H1 (cell line): ENCODE measurements at regions of chr11 and their contacts with region 1.

Region 1: GRCh38 chr11:3164138-3164978 is 752 bp downstream of the OSBPL5 start:
- DNase-seq: no peak
- H3K4me3 ChIP-seq: peak overlapping the region; percentile 49 to 68 (median 54)
- H3K27ac ChIP-seq: no peak overlapping the region
- H3K4me1 ChIP-seq: peaks cover 8 to 34% (median 29%) of the 10 kb centered on the region in 4 experiments
- H3K27me3 ChIP-seq: peaks cover 0 to 44% (median 21%) of the 10 kb centered on the region in 4 experiments; a peak in 6 of 7 replicates
- CTCF ChIP-seq: no peak
- EP300 ChIP-seq: no peak
- POLR2A ChIP-seq: no peak
- RAD21 ChIP-seq: no peak

Region 2: DNA sequence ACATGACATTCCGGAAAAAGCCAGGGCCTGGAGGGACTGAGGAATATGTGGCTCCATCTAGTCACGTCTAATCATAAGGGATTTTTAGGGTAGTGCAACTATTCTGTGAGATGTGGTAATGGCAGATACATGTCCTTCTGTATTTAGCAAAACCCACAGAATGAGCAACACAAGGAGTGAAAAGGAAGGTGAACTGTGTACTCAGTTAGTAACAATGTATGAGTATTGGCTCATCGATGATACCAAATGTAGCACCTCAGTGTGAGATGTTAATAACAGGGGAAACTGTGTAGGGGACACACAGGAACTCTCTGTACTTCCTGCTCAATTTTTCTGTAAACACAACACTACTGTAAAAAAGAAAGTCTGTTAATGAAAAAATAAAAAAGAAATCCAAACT is 65.2 kb before region 1 on chr11:
- CTCF ChIA-PET with region 1: no interaction called
- POLR2A ChIA-PET with region 1: no interaction called
- DNase-seq: no peak
- H3K4me3 ChIP-seq: no peak overlapping the region
- H3K27ac ChIP-seq: no peak overlapping the region
- H3K4me1 ChIP-seq: 0 out of 7 replicates have a peak, but pooled peaks cover 0 to 2% (median 0%) of the 10 kb centered on the region in 4 experiments
- H3K27me3 ChIP-seq: no peaks in the 10 kb centered on the region
- CTCF ChIP-seq: no peak
- EP300 ChIP-seq: no peak
- POLR2A ChIP-seq: no peak
- RAD21 ChIP-seq: no peak

Region 3: DNA sequence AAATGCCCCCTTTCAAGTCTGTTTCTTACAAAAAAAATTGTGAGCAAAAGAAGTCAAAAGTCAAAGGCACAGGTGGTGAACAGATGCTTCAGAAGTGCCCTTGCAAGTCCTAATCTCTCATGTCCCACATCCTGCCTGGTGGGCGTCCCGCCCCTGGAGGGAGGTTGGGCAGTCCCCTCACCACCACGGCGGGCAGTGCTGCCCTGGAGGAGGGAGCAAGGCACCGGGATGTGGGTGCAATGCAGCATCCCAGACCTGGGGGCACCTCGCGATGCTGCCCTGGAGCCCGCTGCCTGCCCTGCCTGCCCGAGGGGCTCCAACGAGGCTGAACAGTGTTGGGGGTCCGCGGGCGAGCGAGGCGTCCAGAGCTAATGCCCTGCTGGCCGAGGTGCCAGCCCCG is 38.4 kb after region 1 on chr11:
- CTCF ChIA-PET with region 1: interaction called, 11 read pairs
- POLR2A ChIA-PET with region 1: no interaction called
- DNase-seq: no peak
- H3K4me3 ChIP-seq: peak overlapping the region; percentile 30 to 60 (median 51); a peak in 7 of 8 replicates
- H3K27ac ChIP-seq: no peak overlapping the region
- H3K4me1 ChIP-seq: peaks cover 0 to 4% (median under 1%) of the 10 kb centered on the region in 4 experiments; a peak in 6 of 7 replicates
- H3K27me3 ChIP-seq: peaks cover 10 to 42% (median 31%) of the 10 kb centered on the region in 4 experiments
- CTCF ChIP-seq: no peak
- EP300 ChIP-seq: no peak
- POLR2A ChIP-seq: no peak
- RAD21 ChIP-seq: no peak